OCI-LY7 (cell line): ENCODE measurements at regions of chr10 and their contacts with region 1.

Region 1: GRCh38 chr10:44864637-44865288 is 46.4 kb upstream of the TMEM72 start:
- DNase-seq: peak; percentile 67
- H3K4me3 ChIP-seq: peak overlapping the region; percentile 57
- H3K27ac ChIP-seq: no peak overlapping the region
- H3K4me1 ChIP-seq: no peaks in the 10 kb centered on the region
- CTCF ChIP-seq: peak; percentile 95

Region 2: DNA sequence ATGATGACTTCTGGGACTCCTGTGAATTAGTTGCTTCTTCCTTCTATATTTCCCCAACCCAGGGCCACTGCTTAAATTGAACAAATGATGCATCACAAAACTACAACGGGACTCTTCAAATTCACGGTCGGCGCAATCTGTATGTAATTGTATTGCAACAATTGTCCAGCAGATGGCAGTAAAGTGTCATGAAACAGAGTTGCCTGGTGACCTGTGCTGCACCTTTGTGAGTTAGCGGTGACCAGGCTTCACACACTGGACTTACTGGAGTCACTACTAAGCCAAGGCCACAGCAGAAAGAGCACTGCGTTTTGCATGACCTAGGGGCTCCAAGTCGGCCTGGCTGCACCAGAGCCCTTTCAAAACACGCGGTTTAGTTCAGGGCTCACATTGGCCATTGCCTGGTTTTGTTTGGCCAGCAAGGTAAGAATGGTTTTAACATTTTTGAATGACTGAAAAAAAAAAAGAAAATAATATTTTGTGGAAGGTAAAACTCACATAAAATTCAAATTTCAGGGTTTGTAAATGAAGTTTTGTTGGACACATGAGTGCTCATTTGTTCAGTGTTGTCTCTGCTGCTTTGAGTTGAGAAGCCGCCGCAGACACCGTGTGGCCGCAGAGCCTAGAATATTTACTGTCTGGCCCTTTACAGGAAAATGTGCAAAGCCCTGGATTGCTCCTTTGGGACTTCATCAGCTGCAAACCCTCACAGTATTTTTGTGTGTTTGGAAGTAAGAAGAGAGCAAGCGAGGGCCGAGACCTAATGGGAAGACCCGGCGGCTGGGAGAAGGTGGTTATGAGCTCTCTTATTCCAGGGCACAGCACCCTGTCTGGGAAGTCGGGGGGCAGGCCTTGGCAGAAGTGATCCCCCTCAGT is 1192.9 kb before region 1 on chr10:
- CTCF ChIA-PET with region 1: no interaction called
- POLR2A ChIA-PET with region 1: no interaction called
- intact Hi-C with region 1: loop called (anchors 2 kb)
- DNase-seq: peak; percentile 67
- H3K4me3 ChIP-seq: no peak overlapping the region
- H3K27ac ChIP-seq: no peak overlapping the region
- H3K4me1 ChIP-seq: no peaks in the 10 kb centered on the region
- CTCF ChIP-seq: peak; percentile 89

Region 3: GRCh38 chr10:44908066-44908749 is 43.4 kb after region 1 on chr10:
- CTCF ChIA-PET with region 1: no interaction called
- POLR2A ChIA-PET with region 1: no interaction called
- intact Hi-C with region 1: no loop called
- DNase-seq: no peak
- H3K4me3 ChIP-seq: no peak overlapping the region
- H3K27ac ChIP-seq: no peak overlapping the region
- H3K4me1 ChIP-seq: no peaks in the 10 kb centered on the region
- CTCF ChIP-seq: no peak